Right ventricle myocardium inferior (tissue), 1 donor: ENCODE measurements at regions of chr16 and their contacts with region 1.

Region 1: GRCh38 chr16:66751303-66751991 is at the start of gene DYNC1LI2:
- DNase-seq: peak; percentile 95
- ATAC-seq: peak; percentile 95
- total RNA-seq, gene DYNC1LI2: 76.6 TPM

Region 2: DNA sequence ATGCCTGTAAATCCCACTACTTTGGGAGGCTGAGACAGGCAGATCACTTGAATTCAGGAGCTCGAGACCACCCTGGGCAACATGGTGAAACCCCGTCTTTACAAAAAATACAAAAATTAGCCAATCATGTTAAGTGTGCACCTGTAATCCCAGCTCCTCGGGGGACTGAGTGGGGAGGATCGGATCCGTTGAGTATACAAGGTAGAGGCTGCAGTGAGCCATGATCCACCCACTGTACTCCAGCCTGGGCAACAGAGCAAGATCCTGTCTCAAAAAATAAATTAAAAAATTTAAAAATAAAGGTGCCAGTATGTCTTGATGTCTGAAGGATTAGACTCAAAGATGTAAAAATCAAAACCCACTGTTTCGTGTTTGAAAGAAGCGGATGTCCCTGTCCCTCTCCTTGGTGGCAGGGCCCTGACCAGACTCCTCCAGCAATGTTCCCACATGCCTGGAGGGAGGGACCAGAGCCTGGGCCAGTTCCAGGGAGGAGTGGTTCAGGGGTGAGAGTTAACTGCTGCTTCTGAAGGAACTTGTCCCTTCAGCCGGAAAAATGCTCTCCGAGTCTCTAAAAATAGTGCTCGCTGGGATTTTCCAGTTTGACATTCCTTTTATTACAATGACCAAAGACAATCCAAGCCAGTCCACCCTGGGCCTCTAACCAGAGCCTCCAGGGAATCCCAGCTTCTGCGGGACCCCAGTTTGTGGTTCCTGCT is 45.5 kb before region 1 on chr16:
- intact Hi-C with region 1: no loop called
- DNase-seq: peak; percentile 80
- ATAC-seq: peak; percentile 83

Region 3: GRCh38 chr16:66830422-66831404 is 79.3 kb after region 1 on chr16 and contains the start of gene NAE1:
- intact Hi-C with region 1: loop called (anchors 5 kb)
- DNase-seq: peak; percentile 94
- ATAC-seq: peak; percentile 98
- total RNA-seq, gene NAE1: 32.4 TPM

Region 4: DNA sequence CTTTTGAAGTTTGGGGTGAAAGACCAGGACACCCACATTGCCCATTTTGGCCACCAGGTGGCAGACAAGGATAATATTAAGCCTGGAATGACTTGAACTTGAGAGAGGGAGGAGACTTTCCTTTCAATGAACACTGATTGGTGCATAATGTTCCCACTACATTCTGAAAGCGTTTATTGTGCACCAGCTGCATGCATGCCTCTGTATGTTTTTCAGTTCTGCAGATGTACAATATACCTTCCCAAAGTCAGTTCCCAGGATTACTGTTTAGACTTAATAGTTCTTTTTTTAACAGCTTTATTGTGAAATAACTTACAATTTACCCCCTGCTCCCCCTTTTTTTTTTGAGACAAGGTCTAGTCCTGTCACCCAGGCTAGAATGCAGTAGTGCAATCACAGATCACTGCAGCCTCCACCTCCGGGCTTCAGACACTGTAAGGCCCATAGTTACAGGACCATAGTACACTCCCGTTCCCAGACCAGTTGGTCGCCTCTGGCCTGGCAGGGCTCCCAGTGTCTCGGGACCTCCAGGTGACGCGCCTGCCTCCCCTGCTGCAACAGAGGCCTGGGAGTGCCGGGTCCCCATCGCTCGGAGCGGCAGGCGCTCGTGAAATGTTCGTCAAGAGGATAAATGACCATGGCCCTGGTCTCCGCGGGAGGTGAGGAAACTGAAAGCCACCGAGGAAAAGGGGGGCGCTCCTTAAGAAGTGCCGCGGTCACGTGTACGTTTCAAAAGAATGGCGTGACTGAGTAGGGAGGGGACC is 196.0 kb after region 1 on chr16:
- intact Hi-C with region 1: no loop called
- DNase-seq: peak; percentile 80
- ATAC-seq: peak; percentile 74

Region 5: GRCh38 chr16:66977341-66978113 is 226.1 kb after region 1 on chr16:
- intact Hi-C with region 1: no loop called
- DNase-seq: peak; percentile 94
- ATAC-seq: peak; percentile 96